Activated T-helper 1 cell treated with anti-CD3 and anti-CD28 coated beads, Interleukin-12 subunit alpha, Interleukin-12 subunit beta, Interleukin-2, Interleukin-4 antibody, amounts not matched to agents 30 ng/mL and 10 ng/mL and 1 ng/mL, durations not matched to agents 14 hours and 24 hours and 36 hours (primary cell): ENCODE measurements at regions of chr5 and their contacts with region 1.

Region 1: GRCh38 chr5:142012792-142013388 is at the start of gene GNPDA1:
- DNase-seq: peak; percentile 71
- H3K4me3 Mint-ChIP-seq: peak within 1 kb of the TSS; percentile 89
- H3K27ac Mint-ChIP-seq: peak within 1 kb of the TSS; percentile 97
- H3K4me1 Mint-ChIP-seq: peaks cover 87% of the 10 kb centered on the region
- H3K27me3 Mint-ChIP-seq: no peaks in the 10 kb centered on the region
- total RNA-seq, gene GNPDA1: 87.5 and 88.4 TPM in 2 replicates

Region 2: DNA sequence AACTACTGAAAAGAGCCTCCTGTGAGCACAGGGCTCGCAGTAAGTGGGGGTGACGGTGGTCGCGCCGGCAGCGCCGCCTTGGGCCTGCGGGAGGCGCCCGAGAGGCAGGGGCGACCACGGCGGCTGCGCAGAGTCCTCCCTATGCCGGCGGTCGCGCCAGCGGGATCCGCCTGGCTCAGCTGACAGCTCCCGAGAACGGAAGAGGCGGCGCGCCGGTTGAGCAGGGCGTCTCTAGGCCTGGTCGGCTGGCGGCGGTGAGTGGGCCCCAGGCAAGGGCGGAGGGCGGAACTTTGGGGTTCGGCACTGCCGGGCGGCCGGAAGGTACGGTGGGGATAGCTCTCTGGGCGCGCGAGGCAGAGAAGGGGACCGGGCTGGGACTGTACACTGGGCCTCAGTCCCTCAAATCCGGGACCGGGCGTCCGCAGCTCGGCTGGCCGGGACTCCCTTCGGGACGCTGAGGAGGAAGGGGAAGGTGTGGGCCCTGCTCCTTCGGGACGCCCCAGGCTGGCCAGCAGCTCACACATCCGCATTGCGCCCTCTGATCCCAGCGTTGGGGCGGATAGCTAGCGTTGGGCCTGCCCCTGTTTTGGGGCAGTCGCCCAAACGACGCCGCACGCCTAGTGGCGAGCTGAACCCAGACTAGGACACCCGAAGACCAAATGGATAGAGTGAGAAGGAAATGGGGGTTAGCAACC is 43.8 kb before region 1 on chr5 and contains the start of gene RNF14:
- intact Hi-C with region 1: loop called (anchors 1 kb)
- DNase-seq: peak; percentile 95
- H3K4me3 Mint-ChIP-seq: peak within 1 kb of the TSS; percentile 92
- H3K27ac Mint-ChIP-seq: peak within 1 kb of the TSS; percentile 93
- H3K4me1 Mint-ChIP-seq: peaks cover 26% of the 10 kb centered on the region
- H3K27me3 Mint-ChIP-seq: no peaks in the 10 kb centered on the region
- total RNA-seq, gene RNF14: 26.4 and 28.7 TPM in 2 replicates

Region 3: DNA sequence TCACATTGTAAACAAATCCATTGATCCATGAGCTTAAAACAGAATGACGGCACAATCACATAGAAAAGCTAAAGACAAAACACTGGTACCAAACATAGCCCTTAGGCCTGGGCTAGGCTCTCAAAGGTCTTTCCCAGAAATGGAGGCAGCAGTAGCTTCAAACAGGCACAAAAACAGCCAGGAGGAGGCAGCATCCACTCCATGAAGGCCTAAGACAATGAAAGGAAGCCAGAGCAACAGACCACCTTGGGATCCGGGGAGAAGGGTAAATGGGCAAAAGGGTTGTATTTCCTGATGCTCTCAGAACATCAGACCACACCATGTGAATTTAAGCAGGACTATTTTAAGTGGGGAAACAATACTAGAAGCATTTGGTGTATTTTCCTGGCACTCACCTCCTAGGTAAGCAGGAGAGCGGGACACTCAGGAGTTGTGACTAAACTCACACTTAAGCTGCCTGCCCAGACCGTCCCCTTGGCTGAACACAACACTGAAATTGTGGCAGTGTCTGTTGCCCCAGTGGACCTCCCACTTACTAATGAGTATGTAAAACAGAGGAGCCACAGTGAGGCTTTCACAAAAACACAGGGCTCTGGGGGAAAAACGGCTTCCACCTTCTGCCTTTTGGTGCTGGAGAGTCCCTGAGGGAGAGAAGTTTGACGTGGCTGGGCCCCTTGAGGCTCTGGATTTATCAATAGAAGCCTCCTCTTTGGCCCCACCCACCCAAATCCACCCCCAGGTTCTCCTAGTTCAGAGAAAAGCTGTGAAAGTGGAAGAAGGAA is 12.0 kb before region 1 on chr5:
- intact Hi-C with region 1: loop called (anchors 2 kb)
- DNase-seq: no peak
- H3K4me3 Mint-ChIP-seq: no peak overlapping the region
- H3K27ac Mint-ChIP-seq: peak overlapping the region; percentile 70
- H3K4me1 Mint-ChIP-seq: peaks cover 33% of the 10 kb centered on the region
- H3K27me3 Mint-ChIP-seq: no peaks in the 10 kb centered on the region

Region 4: DNA sequence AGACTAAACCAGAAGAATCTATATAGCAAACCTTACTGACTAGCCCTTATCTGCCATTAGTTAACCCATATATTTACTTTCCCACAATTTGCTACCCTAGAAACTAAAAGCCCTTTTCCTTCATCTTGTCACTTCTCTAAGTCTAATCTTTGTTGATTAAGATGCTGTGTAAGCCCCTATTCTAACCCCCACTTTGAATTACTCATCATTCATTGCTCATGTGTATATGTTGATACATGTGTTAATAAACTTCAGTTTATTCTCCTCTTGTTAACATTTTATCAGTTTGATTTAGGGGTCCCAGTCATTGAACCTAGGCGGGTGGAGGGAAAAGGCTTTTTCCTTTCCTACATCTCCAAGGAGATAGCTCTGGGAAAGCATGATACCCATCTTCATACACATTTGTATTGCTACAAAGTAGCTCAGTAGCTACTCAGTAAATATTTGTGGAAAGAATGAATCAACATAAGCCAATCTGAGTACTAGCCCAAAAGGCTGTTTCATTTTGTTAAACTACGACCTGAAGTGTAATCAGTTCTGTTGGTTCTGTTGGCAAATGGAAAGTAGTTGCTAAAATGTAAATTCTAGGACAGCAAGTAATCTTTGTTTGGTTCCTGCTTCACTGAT is 60.6 kb after region 1 on chr5:
- intact Hi-C with region 1: loop called (anchors 1 kb)
- DNase-seq: no peak
- H3K4me3 Mint-ChIP-seq: no peak overlapping the region
- H3K27ac Mint-ChIP-seq: peak overlapping the region; percentile 95
- H3K4me1 Mint-ChIP-seq: peaks cover 43% of the 10 kb centered on the region
- H3K27me3 Mint-ChIP-seq: no peaks in the 10 kb centered on the region

Region 5: GRCh38 chr5:142095651-142096330 is 82.9 kb after region 1 on chr5:
- intact Hi-C with region 1: loop called (anchors 1 kb)
- DNase-seq: peak; percentile 63
- H3K4me3 Mint-ChIP-seq: peak overlapping the region; percentile 16
- H3K27ac Mint-ChIP-seq: peak overlapping the region; percentile 94
- H3K4me1 Mint-ChIP-seq: peaks cover 51% of the 10 kb centered on the region
- H3K27me3 Mint-ChIP-seq: no peaks in the 10 kb centered on the region

Region 6: DNA sequence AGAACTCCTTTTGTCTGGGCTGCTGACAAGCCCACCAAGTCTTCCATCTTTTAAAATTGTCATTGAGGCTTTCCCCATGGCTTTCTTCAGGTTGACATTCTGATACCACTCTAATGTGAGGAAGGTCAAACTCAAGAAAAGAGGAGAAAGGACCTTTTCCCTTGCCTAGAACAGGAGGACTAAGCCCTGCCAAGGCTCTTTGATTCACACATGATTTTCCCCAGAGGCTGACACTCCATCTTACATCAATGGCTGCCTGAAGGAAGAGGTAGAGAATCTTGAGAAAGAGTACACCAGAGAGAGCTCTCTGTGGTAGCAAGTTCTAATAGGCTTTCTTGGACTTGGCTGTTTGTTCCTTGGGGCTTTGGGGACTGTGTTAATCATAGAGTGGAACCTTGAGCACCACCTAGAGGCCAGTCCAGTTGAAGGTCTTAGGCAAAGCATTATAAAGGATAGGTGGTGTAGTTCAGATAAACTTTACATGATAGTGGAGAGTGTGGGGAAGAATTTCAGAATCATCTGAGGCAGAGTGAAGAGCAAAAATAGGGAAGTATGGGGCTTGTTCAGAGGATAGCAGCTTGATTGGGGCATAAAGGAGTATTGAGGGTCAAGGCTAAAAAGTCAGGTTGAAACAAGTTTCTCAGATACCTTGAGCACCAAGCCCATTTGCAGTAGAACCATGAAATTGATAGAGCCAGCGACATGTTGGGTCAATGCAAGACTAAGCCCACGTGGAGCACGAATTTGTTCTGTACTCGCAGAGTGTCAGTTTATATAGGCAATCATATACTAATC is 132.4 kb after region 1 on chr5:
- intact Hi-C with region 1: loop called (anchors 1 kb)
- DNase-seq: peak; percentile 26
- H3K4me3 Mint-ChIP-seq: no peak overlapping the region
- H3K27ac Mint-ChIP-seq: no peak overlapping the region
- H3K4me1 Mint-ChIP-seq: peaks cover 6% of the 10 kb centered on the region
- H3K27me3 Mint-ChIP-seq: no peaks in the 10 kb centered on the region

Region 7: GRCh38 chr5:142356716-142357473 is 344.0 kb after region 1 on chr5:
- intact Hi-C with region 1: loop called (anchors 2 kb)
- DNase-seq: peak; percentile 88
- H3K4me3 Mint-ChIP-seq: peak overlapping the region; percentile 84
- H3K27ac Mint-ChIP-seq: peak overlapping the region; percentile 92
- H3K4me1 Mint-ChIP-seq: peaks cover 58% of the 10 kb centered on the region
- H3K27me3 Mint-ChIP-seq: no peaks in the 10 kb centered on the region